IMR-90 (cell line): ENCODE measurements at regions of chr4 and their contacts with region 1.

Region 1: DNA sequence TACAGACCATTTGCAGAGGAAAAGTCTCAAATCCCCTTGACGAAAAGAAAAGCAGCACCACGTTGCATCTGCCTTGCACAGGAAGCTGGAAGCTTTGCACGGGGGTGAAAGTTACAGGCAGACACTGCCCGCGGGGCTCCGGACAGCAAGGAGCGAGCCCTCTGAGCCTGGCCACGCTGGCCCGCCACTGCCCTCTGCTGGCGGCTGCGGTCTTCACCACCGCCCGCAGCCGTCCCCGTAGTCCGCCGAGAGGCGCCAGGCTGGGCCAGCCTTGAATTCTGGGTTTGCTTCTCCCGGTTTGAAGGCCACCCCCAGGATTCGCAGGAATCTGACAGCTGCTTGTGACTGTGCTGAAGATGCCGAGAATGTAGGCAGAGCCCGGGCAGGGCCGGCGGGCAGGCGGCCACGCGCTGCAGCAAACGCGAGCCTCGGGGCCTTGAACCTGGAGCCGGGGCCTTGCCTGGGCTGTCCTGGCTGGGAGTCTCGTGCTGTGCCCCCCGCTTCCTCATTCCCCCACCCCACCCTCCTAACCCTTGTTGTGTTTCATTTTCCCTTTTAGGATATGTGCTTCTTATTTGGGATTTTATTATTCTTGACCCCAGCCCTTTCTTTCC is 49.2 kb downstream of the ENPP6 start:
- DNase-seq: peak; percentile 47
- ATAC-seq: peak; percentile 95
- H3K4me3 ChIP-seq: no peak overlapping the region
- H3K27ac ChIP-seq: no peak overlapping the region
- H3K4me1 ChIP-seq: peaks cover 5% of the 10 kb centered on the region; the same call in 1 of the 2 replicates
- H3K27me3 ChIP-seq: peaks cover 4% of the 10 kb centered on the region; the same call in 1 of the 2 replicates
- CTCF ChIP-seq: peak; percentile 88
- POLR2A ChIP-seq: no peak
- RAD21 ChIP-seq: peak; percentile 85

Region 2: GRCh38 chr4:183722731-183723560 is 445.6 kb before region 1 on chr4:
- CTCF ChIA-PET with region 1: no interaction called
- POLR2A ChIA-PET with region 1: no interaction called
- dilution Hi-C with region 1: no loop called
- in situ Hi-C with region 1: no loop called
- intact Hi-C with region 1: loop called (anchors 5 kb)
- DNase-seq: peak; percentile 4
- ATAC-seq: peak; percentile 78
- H3K4me3 ChIP-seq: peak overlapping the region; percentile 49
- H3K27ac ChIP-seq: no peak overlapping the region
- H3K4me1 ChIP-seq: no peaks in the 10 kb centered on the region
- H3K27me3 ChIP-seq: peaks cover 6% of the 10 kb centered on the region
- CTCF ChIP-seq: no peak
- POLR2A ChIP-seq: no peak
- RAD21 ChIP-seq: no peak

Region 3: GRCh38 chr4:183905081-183905592 is 263.4 kb before region 1 on chr4 and contains the start of gene STOX2:
- CTCF ChIA-PET with region 1: no interaction called
- POLR2A ChIA-PET with region 1: no interaction called
- dilution Hi-C with region 1: no loop called
- in situ Hi-C with region 1: no loop called
- intact Hi-C with region 1: loop called (anchors 5 kb)
- DNase-seq: peak; percentile 55
- ATAC-seq: peak; percentile 79
- H3K4me3 ChIP-seq: peak within 1 kb of the TSS; percentile 60
- H3K27ac ChIP-seq: peak within 1 kb of the TSS; percentile 41
- H3K4me1 ChIP-seq: no peaks in the 10 kb centered on the region
- H3K27me3 ChIP-seq: peaks cover 16% of the 10 kb centered on the region
- CTCF ChIP-seq: no peak
- POLR2A ChIP-seq: no peak
- RAD21 ChIP-seq: no peak
- total RNA-seq, gene STOX2: 4.4 and 5.4 TPM in 2 replicates

Region 4: DNA sequence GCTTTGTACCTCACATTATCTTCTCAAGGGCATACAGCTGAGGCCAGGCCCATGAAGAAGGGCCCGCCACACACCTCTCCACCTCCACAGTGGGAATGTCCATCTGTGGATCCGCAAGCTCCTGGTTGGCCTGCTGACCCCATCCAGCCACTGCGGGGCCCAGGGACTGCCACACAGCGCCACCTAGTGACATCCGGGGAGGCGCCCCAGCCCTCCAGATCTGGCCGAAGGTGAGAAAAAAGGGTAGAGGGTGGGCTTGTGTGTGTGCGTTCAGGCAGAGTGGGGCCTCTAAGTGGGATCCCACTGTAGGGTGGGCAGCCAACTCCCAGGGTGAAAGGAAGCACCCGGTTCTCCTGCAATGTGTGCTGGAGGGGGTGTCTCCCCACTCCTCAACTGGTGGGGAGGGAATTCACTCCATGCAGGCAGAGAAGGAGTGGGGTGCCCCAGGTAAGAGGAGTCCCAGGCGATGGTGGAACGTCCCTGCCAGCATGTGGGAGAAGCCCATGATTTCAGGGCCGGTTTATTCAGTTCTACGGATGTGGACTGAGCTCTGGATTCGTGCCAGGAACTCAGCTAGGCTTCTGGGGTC is 68.1 kb before region 1 on chr4:
- CTCF ChIA-PET with region 1: interaction called, 3 read pairs
- POLR2A ChIA-PET with region 1: no interaction called
- dilution Hi-C with region 1: no loop called
- in situ Hi-C with region 1: no loop called
- intact Hi-C with region 1: loop called (anchors 1 kb)
- DNase-seq: peak; percentile 26
- ATAC-seq: peak; percentile 75
- H3K4me3 ChIP-seq: no peak overlapping the region
- H3K27ac ChIP-seq: peak overlapping the region; percentile 80; the same call in 1 of the 2 replicates
- H3K4me1 ChIP-seq: peaks cover 14% of the 10 kb centered on the region; the same call in 1 of the 2 replicates
- H3K27me3 ChIP-seq: no peaks in the 10 kb centered on the region; the same call in 1 of the 2 replicates
- CTCF ChIP-seq: peak; percentile 83
- POLR2A ChIP-seq: no peak
- RAD21 ChIP-seq: peak; percentile 88

Region 5: DNA sequence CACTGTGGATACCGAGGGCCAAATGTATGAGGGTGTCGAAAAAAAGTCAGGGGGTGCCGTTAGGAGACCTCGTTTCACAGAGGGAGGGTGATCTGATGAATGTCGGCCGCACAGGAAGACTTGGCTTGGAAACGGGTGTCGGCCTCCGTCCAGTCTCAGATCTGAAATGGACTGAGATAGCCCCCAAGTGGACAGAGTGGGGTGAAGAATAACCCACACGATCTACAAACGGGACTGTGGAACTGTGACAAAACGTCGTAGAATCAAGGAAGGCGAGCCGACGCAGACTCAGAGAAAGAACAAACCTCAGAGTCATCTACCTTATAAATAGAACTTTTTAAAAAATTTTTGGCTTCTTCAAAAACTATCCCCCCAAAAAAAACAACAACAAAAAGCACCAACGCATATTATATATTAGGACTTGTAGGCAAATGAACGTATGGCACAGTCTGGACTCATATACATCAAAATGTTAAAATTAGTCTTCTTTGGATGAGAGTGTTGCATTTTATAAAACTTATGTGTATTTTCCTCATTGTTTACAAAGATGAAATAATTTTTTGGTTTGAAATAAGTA is 369.6 kb after region 1 on chr4:
- CTCF ChIA-PET with region 1: no interaction called
- POLR2A ChIA-PET with region 1: no interaction called
- dilution Hi-C with region 1: no loop called
- in situ Hi-C with region 1: no loop called
- intact Hi-C with region 1: loop called (anchors 2 kb)
- DNase-seq: peak; percentile 90
- ATAC-seq: peak; percentile 79
- H3K4me3 ChIP-seq: peak overlapping the region; percentile 81
- H3K27ac ChIP-seq: peak overlapping the region; percentile 63
- H3K4me1 ChIP-seq: no peaks in the 10 kb centered on the region
- H3K27me3 ChIP-seq: no peaks in the 10 kb centered on the region
- CTCF ChIP-seq: peak; percentile 85
- POLR2A ChIP-seq: no peak
- RAD21 ChIP-seq: peak; percentile 90